ENCODE measurements at regions of chr19 and their contacts with region 1.

Region 1: GRCh38 chr19:13861732-13862531 is 15.0 kb upstream of the NANOS3 start:
- DNase-seq: peak; percentile 93
- ATAC-seq: peak; percentile 93
- H3K4me3 Mint-ChIP-seq: peak overlapping the region; percentile 95
- H3K27ac Mint-ChIP-seq: peak overlapping the region; percentile 95
- H3K4me1 Mint-ChIP-seq: peaks cover 42% of the 10 kb centered on the region
- H3K27me3 Mint-ChIP-seq: peaks cover 18% of the 10 kb centered on the region

Region 2: DNA sequence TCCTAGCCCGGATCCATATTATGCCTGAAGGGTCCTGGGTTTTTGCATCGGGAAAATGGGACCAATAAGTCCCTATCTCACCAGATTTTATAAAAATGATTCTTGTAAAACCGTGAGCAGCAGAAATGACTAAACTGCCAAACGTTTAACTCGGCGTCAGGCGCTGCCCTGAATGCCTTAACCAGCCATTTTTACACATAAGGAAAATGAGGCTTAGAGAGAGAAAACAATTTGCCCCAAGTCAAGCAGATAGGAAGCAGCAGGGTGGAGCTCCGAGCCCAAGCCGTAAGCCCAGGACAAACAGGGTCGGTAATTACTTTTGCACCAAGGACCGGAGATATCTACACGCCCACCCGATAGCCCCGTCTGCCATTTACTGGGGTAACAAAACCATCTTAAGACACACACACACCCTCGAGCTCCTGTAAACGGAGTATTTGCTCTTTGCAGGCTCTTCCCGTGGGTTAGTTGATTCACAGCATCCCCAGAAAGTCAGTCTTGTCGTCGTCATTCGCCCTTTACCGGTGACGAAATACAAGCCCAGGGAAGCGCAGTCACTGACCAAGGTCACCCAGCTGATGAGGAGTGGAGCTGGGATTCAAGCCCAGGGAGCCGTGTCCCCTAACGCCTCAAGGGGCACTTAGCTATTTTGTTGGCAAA is 113.6 kb before region 1 on chr19:
- POLR2A ChIA-PET with region 1: interaction called, 10 read pairs
- DNase-seq: no peak
- ATAC-seq: peak; percentile 4
- H3K4me3 Mint-ChIP-seq: peak overlapping the region; percentile 96
- H3K27ac Mint-ChIP-seq: peak overlapping the region; percentile 91
- H3K4me1 Mint-ChIP-seq: peaks cover 21% of the 10 kb centered on the region
- H3K27me3 Mint-ChIP-seq: no peaks in the 10 kb centered on the region

Region 3: DNA sequence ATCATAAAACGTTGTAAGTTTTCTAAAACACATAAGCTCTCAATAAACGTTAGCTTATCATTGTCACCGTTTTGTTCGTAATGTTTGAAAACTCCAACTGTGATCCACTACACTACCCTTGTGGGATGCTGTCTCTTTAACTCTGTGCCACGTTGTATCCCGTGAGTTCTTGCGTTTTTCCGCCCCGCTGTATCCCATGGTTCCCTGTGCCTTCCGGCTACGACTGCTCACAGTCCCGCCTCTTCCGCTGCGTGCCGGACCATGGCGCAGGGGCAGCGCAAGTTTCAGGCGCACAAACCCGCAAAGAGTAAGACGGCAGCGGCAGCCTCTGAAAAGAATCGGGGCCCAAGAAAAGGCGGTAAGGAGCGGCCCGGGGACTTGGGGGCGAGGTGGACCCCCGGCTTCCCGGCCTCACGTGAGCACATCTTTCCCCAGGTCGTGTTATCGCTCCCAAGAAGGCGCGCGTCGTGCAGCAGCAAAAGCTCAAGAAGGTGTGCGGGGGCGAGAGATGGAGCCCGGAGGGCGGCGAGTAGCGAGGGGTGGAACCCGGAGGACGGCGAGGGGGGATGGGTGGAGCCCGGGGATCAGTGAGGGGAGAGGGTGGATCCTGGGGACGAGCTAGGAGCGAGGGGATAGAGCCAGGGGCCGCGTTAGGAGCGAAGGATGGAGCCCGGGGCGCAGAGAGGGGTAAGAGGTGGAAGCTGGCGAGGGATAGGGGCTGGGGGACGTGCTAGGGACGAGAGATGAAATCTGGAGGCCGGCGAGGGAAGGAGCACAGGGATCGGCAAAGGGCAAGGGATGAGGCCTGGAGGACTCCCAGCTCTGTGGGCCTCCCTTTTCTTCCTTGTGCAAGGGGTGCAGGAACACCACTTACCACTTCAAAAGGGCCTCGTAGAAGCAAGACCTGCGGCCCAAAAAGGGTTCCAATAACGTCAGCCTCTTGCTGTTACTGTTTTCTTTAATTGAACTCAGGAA is 87.4 kb before region 1 on chr19 and contains the start of gene C19orf53:
- POLR2A ChIA-PET with region 1: interaction called, 12 read pairs
- DNase-seq: peak; percentile 84
- ATAC-seq: peak; percentile 95
- H3K4me3 Mint-ChIP-seq: peak within 1 kb of the TSS; percentile 96
- H3K27ac Mint-ChIP-seq: peak within 1 kb of the TSS; percentile 92
- H3K4me1 Mint-ChIP-seq: peaks cover 19% of the 10 kb centered on the region
- H3K27me3 Mint-ChIP-seq: no peaks in the 10 kb centered on the region
- total RNA-seq, gene C19orf53: 85.2 to 88.1 TPM

Region 4: DNA sequence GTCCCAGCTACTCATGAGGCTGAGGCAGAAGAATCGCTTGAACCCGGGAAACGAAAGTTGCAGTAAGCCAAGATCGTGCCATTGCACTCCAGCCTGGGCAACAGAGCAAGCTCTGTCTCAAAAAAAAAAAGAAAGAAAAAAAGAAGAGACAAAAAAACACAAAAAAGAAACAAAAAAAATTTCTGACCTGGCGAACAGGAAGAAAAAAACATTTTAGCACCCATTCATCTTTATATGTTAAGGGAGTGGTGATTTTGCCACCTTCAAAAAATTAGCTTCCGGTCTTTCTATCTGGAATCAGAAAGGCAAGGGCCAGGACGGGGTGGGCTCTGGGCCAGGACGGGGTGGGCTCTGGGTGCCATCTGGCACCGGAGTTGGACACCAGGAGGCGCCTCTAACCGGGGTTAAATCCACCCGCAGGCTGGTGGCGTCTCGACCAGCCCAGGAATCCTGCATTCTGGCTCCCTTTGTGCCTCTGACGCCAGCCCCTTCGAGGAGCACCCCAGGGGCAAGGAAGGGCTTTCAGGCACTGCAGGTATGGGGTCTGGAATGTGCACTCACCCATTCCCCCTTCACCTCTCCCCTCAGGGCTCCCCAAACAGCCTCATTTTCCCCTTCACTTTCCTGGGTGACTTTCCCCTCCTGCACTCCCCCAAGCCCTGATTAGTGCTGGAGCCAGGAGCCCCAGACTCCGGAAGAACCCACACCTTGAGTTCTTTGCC is 77.0 kb before region 1 on chr19:
- POLR2A ChIA-PET with region 1: interaction called, 47 read pairs
- DNase-seq: peak; percentile 78
- ATAC-seq: peak; percentile 62
- H3K4me3 Mint-ChIP-seq: peak overlapping the region; percentile 72
- H3K27ac Mint-ChIP-seq: peak overlapping the region; percentile 74
- H3K4me1 Mint-ChIP-seq: peaks cover 24% of the 10 kb centered on the region
- H3K27me3 Mint-ChIP-seq: no peaks in the 10 kb centered on the region

Region 5: DNA sequence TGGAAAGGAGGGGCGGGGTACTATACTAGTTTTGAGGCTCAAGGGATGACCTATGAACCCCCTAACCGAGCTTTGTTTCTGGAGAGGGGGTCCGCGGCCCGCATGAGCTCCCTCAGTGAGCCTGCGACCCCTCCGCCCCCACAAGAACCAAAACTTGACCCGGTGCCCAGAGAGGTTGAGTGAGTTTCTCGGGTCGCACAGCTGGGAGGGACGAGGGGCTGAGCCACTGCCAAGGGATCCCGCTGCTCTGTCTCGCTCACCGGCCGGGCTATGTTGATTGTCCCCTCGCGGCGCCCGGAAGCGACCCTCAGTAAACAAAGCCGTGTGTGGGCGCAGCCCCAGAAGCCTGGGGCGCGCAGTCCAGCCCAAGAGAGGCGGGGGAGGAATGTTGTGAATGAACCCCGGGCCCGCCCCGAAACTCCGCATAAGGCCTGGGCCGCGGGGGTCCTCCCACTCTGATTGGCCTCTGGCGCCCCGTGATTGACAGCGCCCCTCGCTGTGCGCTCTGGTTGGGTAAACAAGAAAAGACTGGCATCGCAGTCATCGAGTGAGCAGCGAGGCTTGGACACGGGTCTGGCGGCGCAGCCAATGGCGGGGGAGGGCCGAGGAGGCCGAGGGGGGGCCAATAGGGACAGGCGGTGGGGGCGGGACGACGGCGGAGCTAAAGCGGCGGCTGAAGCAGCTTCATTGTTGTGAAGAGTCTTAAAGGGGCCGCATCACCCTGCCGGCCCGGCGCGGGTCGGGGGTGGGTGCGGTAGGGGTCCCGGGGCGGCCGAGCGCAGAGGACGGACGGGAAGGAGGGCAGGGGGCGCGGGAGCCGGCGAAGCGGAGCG is 67.0 kb before region 1 on chr19 and contains the start of gene ZSWIM4:
- POLR2A ChIA-PET with region 1: interaction called, 20 read pairs
- DNase-seq: peak; percentile 92
- ATAC-seq: peak; percentile 99
- H3K4me3 Mint-ChIP-seq: peak within 1 kb of the TSS; percentile 99
- H3K27ac Mint-ChIP-seq: peak within 1 kb of the TSS; percentile 96
- H3K4me1 Mint-ChIP-seq: peaks cover 30% of the 10 kb centered on the region
- H3K27me3 Mint-ChIP-seq: no peaks in the 10 kb centered on the region
- total RNA-seq, gene ZSWIM4: 9.6 to 9.9 TPM

Region 6: GRCh38 chr19:13839130-13839937 is 22.6 kb before region 1 on chr19:
- POLR2A ChIA-PET with region 1: interaction called, 94 read pairs
- DNase-seq: peak; percentile 82
- ATAC-seq: peak; percentile 42
- H3K4me3 Mint-ChIP-seq: peak overlapping the region; percentile 95
- H3K27ac Mint-ChIP-seq: peak overlapping the region; percentile 96
- H3K4me1 Mint-ChIP-seq: peaks cover 28% of the 10 kb centered on the region
- H3K27me3 Mint-ChIP-seq: no peaks in the 10 kb centered on the region

Region 7: DNA sequence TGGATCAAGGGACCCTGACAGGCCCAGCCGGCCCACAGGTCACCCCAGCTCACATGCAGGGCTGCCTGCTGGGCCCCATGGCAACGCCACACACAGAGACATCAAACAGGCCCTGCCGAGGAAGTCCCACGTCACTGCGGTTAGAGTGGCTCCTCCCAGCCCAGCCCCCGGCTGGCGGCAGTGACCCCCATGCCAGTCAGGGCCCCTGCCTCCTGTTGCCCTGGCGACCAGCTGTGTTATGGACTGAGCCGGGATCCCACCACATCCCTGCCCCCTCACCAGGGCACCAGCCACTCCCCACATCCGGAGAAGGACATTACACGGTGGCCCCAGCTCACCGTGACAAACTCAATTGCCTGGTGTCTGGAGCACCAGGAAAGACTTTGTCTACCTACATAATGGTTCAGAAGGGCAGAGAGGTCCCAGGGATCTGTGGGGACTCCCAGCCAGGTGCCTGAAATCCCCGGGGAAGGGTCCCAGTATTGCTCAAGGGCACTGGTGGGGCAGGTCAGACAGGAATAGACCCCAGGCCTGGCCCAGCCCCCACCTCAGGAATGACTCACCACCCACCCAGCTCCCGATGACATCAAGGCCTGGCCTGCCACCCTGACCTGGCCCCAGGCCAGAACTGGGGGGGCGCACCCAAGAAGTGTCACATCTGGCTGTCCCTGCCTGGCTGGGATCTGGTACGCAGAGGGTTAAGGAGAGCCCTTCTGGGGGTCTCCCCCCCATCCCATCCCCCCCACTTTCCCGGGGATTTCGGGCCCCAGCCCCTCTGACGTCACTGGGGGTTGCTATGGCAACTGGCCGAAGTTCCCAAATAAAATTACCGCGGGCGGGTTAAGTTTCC is 15.2 kb before region 1 on chr19:
- POLR2A ChIA-PET with region 1: interaction called, 45 read pairs
- DNase-seq: peak; percentile 93
- ATAC-seq: peak; percentile 53
- H3K4me3 Mint-ChIP-seq: peak overlapping the region; percentile 78
- H3K27ac Mint-ChIP-seq: peak overlapping the region; percentile 96
- H3K4me1 Mint-ChIP-seq: peaks cover 35% of the 10 kb centered on the region
- H3K27me3 Mint-ChIP-seq: no peaks in the 10 kb centered on the region